Activated CD4-positive, alpha-beta T cell treated with anti-CD3 and anti-CD28 coated beads, Interleukin-2, amount 10 ng/mL, durations not matched to agents 24 days and 14 days (primary cell): ENCODE measurements at regions of chr12 and their contacts with region 1.

Region 1: DNA sequence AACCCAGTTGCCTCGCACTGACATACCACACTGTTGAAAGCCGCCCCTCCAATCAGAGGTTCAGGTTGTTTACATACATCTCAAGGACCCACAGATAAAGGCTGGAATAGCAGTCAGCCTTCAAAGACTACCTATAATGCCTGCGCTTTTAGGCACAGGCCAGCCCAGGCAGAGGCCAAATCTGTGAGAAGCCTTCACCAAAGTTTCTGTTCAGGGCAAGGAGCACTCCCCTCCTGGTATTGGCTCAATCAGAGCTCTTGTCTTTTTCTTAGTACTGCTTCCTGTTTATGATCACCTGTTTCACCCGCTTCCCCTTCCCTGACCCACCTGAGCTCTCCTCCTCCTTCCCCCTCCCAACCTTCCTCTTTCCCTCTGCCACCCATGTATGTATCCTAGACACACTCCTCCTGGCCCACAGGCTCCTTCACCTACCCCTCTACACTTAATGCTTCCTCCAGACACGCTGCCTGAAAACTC is 34.8 kb downstream of the DUSP16 start:
- DNase-seq: peak; percentile 72
- H3K4me3 Mint-ChIP-seq: peak overlapping the region; percentile 52
- H3K27ac Mint-ChIP-seq: peak overlapping the region; percentile 75
- H3K4me1 Mint-ChIP-seq: peaks cover 38% of the 10 kb centered on the region
- H3K27me3 Mint-ChIP-seq: no peaks in the 10 kb centered on the region

Region 2: DNA sequence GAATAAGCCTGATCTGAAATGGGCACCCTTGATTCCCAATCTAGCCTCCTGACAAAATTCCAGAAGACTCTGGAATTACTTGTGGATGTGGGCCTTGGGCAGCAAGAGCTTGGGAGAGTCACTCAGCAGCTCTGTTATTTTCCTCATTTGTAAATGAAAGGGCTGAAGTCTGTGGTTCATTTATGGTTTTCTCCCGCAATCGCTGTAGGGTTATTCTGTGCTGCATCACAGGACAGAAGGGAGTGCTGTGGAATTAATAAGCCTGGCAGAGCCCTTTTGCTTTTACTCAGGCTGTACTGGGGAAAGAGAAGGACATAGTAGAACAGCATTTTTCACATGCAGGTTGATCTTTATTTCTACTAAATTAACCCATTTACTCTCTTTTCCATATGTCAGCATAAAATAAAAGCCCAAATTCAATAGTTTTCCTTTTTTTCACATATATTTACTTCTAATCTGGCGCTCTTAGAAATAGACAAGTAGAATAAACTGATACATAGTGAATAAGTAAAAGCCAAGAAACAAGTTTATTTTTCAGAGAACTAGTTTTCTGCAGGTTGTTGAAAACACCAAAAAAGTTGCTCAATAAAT is 14.3 kb before region 1 on chr12:
- intact Hi-C with region 1: loop called (anchors 2 kb)
- DNase-seq: no peak
- H3K4me3 Mint-ChIP-seq: no peak overlapping the region
- H3K27ac Mint-ChIP-seq: no peak overlapping the region
- H3K4me1 Mint-ChIP-seq: peaks cover 21% of the 10 kb centered on the region
- H3K27me3 Mint-ChIP-seq: no peaks in the 10 kb centered on the region